B cell (primary cell): ENCODE measurements at regions of chr12 and their contacts with region 1.

Region 1: DNA sequence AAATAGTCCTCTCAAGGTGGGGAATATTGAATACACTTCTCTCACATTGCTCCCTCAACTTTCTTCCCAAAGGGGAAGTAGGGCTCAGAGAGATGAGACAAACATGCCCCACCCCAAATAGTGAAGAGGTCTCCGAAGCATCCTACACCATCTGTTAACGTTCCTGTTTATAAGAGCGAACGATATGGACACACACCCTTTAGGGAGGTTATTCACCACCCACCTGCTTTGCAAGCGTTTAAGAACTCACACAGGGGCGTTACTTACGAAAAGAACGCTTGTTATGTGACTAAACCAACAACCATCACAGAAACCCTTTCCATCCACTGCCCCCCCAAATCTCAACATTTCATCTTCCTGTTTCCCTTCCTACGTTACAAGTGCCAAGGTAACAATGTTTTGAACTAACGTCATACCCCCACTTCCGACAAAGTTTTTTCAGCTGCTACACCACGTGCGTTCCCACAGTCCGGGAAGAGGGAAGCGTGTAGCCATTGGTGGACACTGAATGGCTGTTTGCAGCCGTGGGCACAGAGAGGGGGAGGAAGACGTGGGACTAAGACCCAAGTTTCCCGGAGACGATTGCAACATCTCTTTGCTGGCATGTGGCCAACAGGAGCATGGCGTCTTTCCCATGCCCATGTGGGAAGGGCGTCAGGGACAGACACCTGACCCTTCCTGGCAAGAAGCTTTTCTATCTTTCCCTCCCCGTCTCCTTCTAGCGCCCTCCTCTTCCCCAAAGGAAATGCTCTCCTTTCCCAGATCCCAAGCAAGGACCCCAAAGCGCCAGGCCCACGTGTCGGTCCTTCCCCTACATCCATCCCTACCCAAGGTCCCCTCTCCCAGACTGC is 1.2 kb downstream of the YBX3 start:
- DNase-seq: peak; percentile 93
- ATAC-seq: peak; percentile 48
- H3K4me3 ChIP-seq: peak overlapping the region; percentile 80 to 92 (median 89)
- H3K4me3 Mint-ChIP-seq: peak overlapping the region; percentile 89
- H3K27ac ChIP-seq: peak overlapping the region; percentile 97 to 98
- H3K27ac Mint-ChIP-seq: peak overlapping the region; percentile 89
- H3K4me1 ChIP-seq: peaks cover 20 to 29% of the 10 kb centered on the region in 2 donors
- H3K4me1 Mint-ChIP-seq: peaks cover 31% of the 10 kb centered on the region
- H3K27me3 ChIP-seq: no peaks in the 10 kb centered on the region
- H3K27me3 Mint-ChIP-seq: peaks cover 32% of the 10 kb centered on the region
- CTCF ChIP-seq: no peak

Region 2: GRCh38 chr12:10708862-10709261 is 13.0 kb before region 1 on chr12:
- CTCF ChIA-PET with region 1: interaction called, 3 read pairs
- POLR2A ChIA-PET with region 1: no interaction called
- intact Hi-C with region 1: loop called (anchors 1 kb)
- DNase-seq: no peak
- ATAC-seq: no peak
- H3K4me3 ChIP-seq: no peak overlapping the region
- H3K4me3 Mint-ChIP-seq: peak overlapping the region; percentile 32
- H3K27ac ChIP-seq: peak overlapping the region; percentile 19 to 63
- H3K27ac Mint-ChIP-seq: peak overlapping the region; percentile 42
- H3K4me1 ChIP-seq: peaks cover 11 to 16% of the 10 kb centered on the region in 2 donors
- H3K4me1 Mint-ChIP-seq: peaks cover 15% of the 10 kb centered on the region
- H3K27me3 ChIP-seq: no peaks in the 10 kb centered on the region
- H3K27me3 Mint-ChIP-seq: no peaks in the 10 kb centered on the region
- CTCF ChIP-seq: no peak

Region 3: DNA sequence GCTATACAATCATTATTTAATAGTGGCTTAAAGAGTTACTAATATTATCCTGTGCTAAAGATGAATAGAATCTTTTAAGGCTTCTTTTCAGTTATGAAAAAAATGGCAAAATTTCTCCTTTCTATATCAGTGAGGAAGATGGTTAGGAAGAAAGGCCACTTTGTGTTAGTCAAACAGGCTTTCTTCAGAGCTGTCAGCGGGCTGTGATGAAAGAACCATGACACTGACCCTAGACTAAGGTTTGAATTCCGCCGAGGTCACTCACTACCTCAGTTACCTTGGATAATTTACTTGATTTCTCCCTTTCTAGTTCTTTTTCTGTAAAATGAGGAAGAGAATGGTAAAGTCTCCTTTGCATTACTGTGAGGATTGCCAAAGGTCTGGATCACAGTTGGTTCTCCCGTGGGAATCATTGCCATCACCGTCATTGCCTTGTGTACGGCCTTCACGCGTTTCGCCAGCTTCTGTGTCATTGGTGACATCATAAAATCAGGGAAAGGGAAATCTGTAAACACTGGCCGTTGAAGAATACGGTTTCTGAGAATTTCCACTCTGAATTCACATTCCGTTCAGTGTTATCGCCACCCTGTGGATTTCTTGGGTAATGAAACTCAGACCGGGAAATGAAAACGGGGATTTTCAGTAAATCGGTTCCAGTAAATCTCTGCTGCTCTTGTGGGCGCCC is 28.0 kb after region 1 on chr12:
- CTCF ChIA-PET with region 1: interaction called, 3 read pairs
- POLR2A ChIA-PET with region 1: no interaction called
- intact Hi-C with region 1: loop called (anchors 2 kb)
- DNase-seq: peak; percentile 85
- ATAC-seq: peak; percentile 98
- H3K4me3 ChIP-seq: peak overlapping the region in 3 of 5 experiments; percentile 31 to 41 (median 34)
- H3K4me3 Mint-ChIP-seq: peak overlapping the region; percentile 72
- H3K27ac ChIP-seq: no peak overlapping the region
- H3K27ac Mint-ChIP-seq: no peak overlapping the region
- H3K4me1 ChIP-seq: peaks cover 5 to 9% of the 10 kb centered on the region in 2 donors
- H3K4me1 Mint-ChIP-seq: peaks cover 9% of the 10 kb centered on the region
- H3K27me3 ChIP-seq: peaks cover 0 to 5% (median 2%) of the 10 kb centered on the region in 4 experiments
- H3K27me3 Mint-ChIP-seq: peaks cover 32% of the 10 kb centered on the region
- CTCF ChIP-seq: peak; percentile 90

Region 4: DNA sequence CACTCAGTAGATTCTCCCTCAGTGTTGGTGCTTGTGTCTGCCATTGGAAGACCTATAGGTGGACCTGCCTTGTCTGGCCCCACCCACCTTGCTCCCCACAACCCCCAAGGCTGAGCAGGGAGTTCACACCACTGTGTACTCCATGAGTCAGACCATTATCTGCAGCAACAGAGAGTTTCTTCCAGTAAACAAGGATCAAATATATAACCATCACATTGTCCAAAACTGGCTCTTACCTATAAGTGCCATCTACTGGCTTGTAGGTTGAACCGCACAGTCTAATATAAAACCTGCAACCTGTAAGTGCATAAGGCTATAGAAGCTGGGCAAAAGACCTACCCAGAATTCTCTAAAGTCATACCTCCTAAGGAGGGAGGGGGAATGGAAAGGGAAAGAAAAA is 179.6 kb after region 1 on chr12:
- CTCF ChIA-PET with region 1: no interaction called
- POLR2A ChIA-PET with region 1: no interaction called
- intact Hi-C with region 1: no loop called
- DNase-seq: no peak
- ATAC-seq: no peak
- H3K4me3 ChIP-seq: no peak overlapping the region
- H3K4me3 Mint-ChIP-seq: no peak overlapping the region
- H3K27ac ChIP-seq: no peak overlapping the region
- H3K27ac Mint-ChIP-seq: no peak overlapping the region
- H3K4me1 ChIP-seq: no peaks in the 10 kb centered on the region
- H3K4me1 Mint-ChIP-seq: no peaks in the 10 kb centered on the region
- H3K27me3 ChIP-seq: no peaks in the 10 kb centered on the region
- H3K27me3 Mint-ChIP-seq: no peaks in the 10 kb centered on the region
- CTCF ChIP-seq: no peak